B cell (primary cell): ENCODE measurements at regions of chr10 and their contacts with region 1.

Region 1: DNA sequence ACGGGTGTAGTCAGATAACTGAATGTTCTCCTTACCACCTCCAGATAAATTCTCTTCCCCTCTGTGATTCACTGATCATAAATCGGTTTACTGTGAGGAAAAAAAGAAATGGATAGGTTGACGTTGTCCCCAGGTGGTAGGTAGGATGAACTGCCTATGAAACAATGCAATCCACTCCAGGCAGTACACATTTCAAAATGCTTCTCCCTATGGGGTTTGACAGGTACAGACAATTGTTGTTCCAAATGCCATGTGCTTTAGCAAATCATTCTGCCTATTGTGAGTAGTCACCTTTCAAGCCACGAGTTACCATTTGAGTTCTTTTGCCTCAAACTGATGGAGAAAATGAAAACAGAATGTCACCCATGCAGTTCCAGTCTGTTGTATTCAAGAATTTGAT is 21.8 kb downstream of the VIM start:
- DNase-seq: peak; percentile 23
- ATAC-seq: peak; percentile 31
- H3K4me3 ChIP-seq: no peak overlapping the region
- H3K4me3 Mint-ChIP-seq: no peak overlapping the region
- H3K27ac ChIP-seq: no peak overlapping the region
- H3K27ac Mint-ChIP-seq: no peak overlapping the region
- H3K4me1 ChIP-seq: no peaks in the 10 kb centered on the region
- H3K4me1 Mint-ChIP-seq: no peaks in the 10 kb centered on the region
- H3K27me3 ChIP-seq: no peaks in the 10 kb centered on the region
- H3K27me3 Mint-ChIP-seq: peaks cover 10% of the 10 kb centered on the region
- CTCF ChIP-seq: peak; percentile 50

Region 2: DNA sequence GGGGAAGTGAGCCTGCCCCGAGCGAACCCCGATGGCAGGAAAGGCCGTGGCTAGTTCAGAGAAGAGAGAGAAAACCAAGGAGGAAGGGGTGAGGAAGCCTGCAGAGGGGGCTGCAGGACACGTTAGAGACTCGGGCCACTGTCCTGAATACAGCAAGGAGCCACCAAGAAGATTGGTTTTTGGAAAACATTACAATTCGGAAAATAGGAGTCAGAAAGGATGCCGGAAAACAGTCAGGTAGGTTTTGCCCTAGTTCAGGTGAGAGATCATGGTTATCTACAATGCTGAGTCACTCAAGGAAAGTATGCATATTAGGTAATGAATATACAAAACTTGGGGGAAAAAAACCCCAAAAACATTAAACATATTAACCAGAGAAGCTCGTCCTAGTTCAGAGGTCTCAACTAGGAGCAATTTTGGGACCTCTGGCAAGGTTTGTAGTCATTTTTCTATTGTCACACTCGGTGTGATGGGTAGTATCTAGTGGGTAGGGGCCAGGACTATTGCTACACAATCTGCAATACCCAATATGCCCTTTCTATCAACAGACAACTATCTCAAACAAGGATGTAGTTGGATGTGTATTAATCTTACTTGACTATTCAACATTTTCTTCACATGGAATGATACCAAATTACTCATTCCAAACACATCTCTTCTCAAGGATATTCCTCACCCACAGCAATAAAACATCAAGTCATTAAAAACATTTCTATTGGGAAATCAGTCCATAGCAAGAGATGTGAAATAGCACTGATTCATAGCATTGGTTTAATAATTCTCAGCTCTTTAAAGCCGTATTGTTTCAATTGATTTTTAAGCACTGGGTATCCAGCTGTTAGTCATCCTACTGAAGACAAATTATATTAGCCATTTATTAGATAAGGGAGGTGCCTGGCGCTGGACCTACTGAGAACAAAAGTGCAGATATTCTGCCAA is 358.2 kb before region 1 on chr10:
- CTCF ChIA-PET with region 1: interaction called, 3 read pairs
- POLR2A ChIA-PET with region 1: no interaction called
- intact Hi-C with region 1: loop called (anchors 1 kb)
- DNase-seq: peak; percentile 40
- ATAC-seq: peak; percentile 66
- H3K4me3 ChIP-seq: peak overlapping the region in 2 of 5 experiments; percentile 21 to 34
- H3K4me3 Mint-ChIP-seq: peak overlapping the region; percentile 67
- H3K27ac ChIP-seq: no peak overlapping the region
- H3K27ac Mint-ChIP-seq: no peak overlapping the region
- H3K4me1 ChIP-seq: peaks cover 5 to 6% of the 10 kb centered on the region in 2 donors
- H3K4me1 Mint-ChIP-seq: peaks cover 10% of the 10 kb centered on the region
- H3K27me3 ChIP-seq: peaks cover 0 to 3% (median 0%) of the 10 kb centered on the region in 4 experiments
- H3K27me3 Mint-ChIP-seq: peaks cover 16% of the 10 kb centered on the region
- CTCF ChIP-seq: peak; percentile 58

Region 3: DNA sequence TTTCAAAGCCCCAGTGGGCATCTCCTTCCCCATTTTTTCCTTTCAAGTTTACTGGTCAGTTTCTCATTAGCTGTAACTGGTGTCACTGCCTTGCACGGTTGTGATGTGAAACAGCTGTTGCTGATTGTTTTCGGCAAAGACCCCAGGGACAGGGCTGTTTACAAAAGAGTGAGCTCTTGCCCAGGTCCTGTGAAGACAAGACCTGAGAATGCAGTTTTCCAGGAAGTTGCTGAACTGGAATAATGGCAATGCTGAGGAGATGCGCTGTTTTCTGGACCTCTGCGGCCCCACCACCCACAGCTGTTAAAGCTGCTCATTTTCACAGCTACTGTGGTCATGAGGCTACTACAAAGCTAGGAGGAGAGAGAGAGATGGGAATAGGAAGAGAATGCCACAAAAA is 316.0 kb before region 1 on chr10:
- CTCF ChIA-PET with region 1: no interaction called
- POLR2A ChIA-PET with region 1: no interaction called
- intact Hi-C with region 1: no loop called
- DNase-seq: no peak
- ATAC-seq: no peak
- H3K4me3 ChIP-seq: no peak overlapping the region
- H3K4me3 Mint-ChIP-seq: no peak overlapping the region
- H3K27ac ChIP-seq: no peak overlapping the region
- H3K27ac Mint-ChIP-seq: no peak overlapping the region
- H3K4me1 ChIP-seq: no peaks in the 10 kb centered on the region
- H3K4me1 Mint-ChIP-seq: no peaks in the 10 kb centered on the region
- H3K27me3 ChIP-seq: no peaks in the 10 kb centered on the region
- H3K27me3 Mint-ChIP-seq: peaks cover 5% of the 10 kb centered on the region
- CTCF ChIP-seq: no peak

Region 4: GRCh38 chr10:17375936-17376584 is 126.2 kb after region 1 on chr10:
- CTCF ChIA-PET with region 1: no interaction called
- POLR2A ChIA-PET with region 1: no interaction called
- intact Hi-C with region 1: no loop called
- DNase-seq: peak; percentile 10
- ATAC-seq: no peak
- H3K4me3 ChIP-seq: no peak overlapping the region
- H3K4me3 Mint-ChIP-seq: no peak overlapping the region
- H3K27ac ChIP-seq: no peak overlapping the region
- H3K27ac Mint-ChIP-seq: no peak overlapping the region
- H3K4me1 ChIP-seq: no peaks in the 10 kb centered on the region
- H3K4me1 Mint-ChIP-seq: no peaks in the 10 kb centered on the region
- H3K27me3 ChIP-seq: no peaks in the 10 kb centered on the region
- H3K27me3 Mint-ChIP-seq: peaks cover 8% of the 10 kb centered on the region
- CTCF ChIP-seq: peak; percentile 39